Mammary epithelial cell (primary cell): ENCODE measurements at regions of chr2 and their contacts with region 1.

Region 1: DNA sequence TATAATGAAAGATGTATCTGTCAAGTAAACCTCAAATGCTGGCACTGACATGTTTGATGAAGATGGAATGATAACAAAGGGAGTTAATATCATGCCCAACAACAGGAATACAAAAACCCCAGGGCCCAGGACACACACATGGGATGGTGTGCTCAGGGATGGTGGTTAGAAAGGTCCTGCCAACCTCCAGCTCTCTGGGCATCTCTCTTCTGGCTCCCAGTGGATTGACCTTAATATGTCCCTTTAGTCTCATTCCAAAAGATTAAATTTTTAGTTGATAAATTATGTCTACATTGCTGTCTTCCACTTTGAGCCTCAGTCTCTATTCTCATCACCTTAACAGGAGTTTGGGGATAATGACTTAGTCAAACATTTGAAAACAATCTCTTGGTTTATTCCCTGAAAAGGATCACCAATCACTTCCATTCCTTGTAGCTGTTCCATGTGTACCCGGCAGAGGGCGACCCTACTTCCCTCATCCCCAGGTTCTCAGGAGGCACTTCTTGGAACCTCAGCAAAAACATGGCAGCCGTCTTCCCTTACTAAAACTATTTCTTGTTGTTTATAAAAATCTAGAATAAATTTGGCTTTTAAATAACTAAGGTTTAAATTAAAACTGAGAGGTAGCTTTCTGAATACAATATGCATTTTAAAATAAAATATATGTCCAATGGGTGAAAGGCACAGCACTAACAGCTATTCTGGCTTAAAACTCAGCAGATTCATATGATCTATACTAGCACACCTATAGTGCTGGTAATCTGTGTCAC is 29.6 kb downstream of the MCEE start:
- DNase-seq: peak; percentile 48
- H3K4me3 ChIP-seq: no peak overlapping the region
- H3K27ac ChIP-seq: no peak overlapping the region
- H3K4me1 ChIP-seq: peaks cover 13% of the 10 kb centered on the region
- H3K27me3 ChIP-seq: no peaks in the 10 kb centered on the region
- CTCF ChIP-seq: peak; percentile 85 to 93

Region 2: GRCh38 chr2:71049365-71050360 is 50.7 kb before region 1 on chr2:
- CTCF ChIA-PET with region 1: no interaction called
- dilution Hi-C with region 1: no loop called
- in situ Hi-C with region 1: no loop called
- intact Hi-C with region 1: loop called (anchors 2 kb)
- DNase-seq: peak; percentile 77
- H3K4me3 ChIP-seq: no peak overlapping the region
- H3K27ac ChIP-seq: no peak overlapping the region
- H3K4me1 ChIP-seq: peaks cover 6% of the 10 kb centered on the region
- H3K27me3 ChIP-seq: no peaks in the 10 kb centered on the region
- CTCF ChIP-seq: peak; percentile 20 to 56

Region 3: DNA sequence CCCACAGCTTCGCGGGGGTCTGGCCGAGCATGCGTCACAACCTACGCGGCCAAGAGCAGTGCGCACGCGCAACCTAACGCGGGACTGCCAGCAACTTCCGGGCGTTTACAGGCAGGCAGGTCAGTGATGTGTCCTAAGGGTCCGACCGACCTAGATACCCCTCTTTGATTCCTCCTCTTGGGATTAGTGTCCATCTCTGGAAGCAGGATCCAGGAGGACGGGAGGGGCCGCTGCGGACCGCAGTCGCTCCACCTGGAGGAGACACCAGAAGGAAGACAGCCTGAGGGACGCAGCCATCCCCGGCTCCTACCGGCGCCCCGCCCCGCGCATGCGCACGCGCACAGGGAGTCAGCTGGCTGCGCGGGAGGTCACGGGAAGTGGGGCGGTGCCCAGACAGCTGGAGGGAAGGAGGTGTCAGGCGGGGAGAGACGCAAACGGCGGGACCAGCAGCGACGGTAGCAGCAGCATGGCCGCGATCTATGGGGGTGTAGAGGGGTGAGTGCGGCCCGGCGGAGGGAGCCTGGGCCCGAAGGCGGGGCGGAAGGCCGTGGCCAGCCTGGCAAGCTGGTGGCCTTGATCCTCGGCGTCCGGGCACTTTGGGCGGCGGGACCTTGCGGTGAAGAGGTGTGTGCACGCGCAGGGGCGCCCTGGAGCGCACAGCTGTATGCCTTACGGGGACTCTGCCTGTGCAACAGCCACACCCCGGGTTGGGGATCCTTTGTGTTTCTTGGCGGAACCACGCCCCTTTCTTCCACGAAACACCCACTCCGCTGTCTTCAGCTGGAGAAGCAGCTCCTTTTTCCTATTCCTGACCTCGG is 32.0 kb before region 1 on chr2 and contains the start of gene NAGK:
- CTCF ChIA-PET with region 1: interaction called, 3 read pairs
- dilution Hi-C with region 1: no loop called
- in situ Hi-C with region 1: no loop called
- intact Hi-C with region 1: loop called (anchors 2 kb)
- DNase-seq: peak; percentile 95
- H3K4me3 ChIP-seq: peak within 1 kb of the TSS; percentile 66 to 78 (median 76)
- H3K27ac ChIP-seq: peak within 1 kb of the TSS; percentile 57
- H3K4me1 ChIP-seq: peaks cover 52% of the 10 kb centered on the region
- H3K27me3 ChIP-seq: no peaks in the 10 kb centered on the region
- CTCF ChIP-seq: peak in 1 of 2 donors; percentile 8
- total RNA-seq, gene NAGK: 29.5 to 80.8 TPM

Region 4: GRCh38 chr2:71130113-71130904 is 29.9 kb after region 1 on chr2 and contains the starts of genes MCEE and MPHOSPH10:
- CTCF ChIA-PET with region 1: no interaction called
- dilution Hi-C with region 1: no loop called
- in situ Hi-C with region 1: no loop called
- intact Hi-C with region 1: loop called (anchors 1 kb)
- DNase-seq: peak; percentile 92
- H3K4me3 ChIP-seq: peak within 1 kb of the TSS; percentile 91 to 98 (median 91)
- H3K27ac ChIP-seq: peak within 1 kb of the TSS; percentile 71
- H3K4me1 ChIP-seq: peaks cover 4% of the 10 kb centered on the region
- H3K27me3 ChIP-seq: no peaks in the 10 kb centered on the region
- CTCF ChIP-seq: no peak
- total RNA-seq, gene MCEE: 7.0 to 9.3 TPM
- total RNA-seq, gene MPHOSPH10: 10.5 to 28.1 TPM

Region 5: DNA sequence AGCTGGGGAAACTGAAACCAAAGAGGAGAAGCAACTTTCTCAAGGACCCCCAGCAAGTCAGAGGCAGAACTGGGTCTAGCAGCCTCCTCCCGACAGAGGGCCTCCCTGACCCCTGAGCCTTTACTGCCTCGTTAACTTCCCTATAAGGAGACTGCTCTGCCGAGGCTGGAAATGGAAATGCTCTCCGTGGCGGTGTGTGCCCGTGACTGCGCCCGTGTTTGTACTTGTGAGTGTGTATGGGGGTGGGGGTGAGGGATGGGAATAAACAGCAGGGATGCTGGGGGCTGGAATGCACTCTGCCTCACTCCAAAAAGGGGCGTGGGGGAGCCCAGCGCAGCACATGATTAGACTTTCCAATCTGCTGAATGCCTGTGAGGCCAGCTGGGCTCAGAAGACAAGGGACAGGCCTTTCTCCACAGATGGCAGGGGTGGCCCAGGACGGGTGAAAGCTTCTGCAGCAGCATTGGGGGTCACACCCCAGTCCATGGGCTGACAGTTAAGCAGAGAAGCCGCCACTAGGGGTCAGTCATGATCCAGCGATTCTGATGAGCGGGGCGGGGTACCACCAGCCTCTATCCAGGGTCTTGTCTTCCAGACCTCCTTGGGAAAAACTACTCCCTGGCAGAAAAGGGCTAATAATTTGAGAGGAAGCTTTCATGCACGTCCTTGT is 56.9 kb after region 1 on chr2:
- CTCF ChIA-PET with region 1: interaction called, 9 read pairs
- dilution Hi-C with region 1: no loop called
- in situ Hi-C with region 1: no loop called
- intact Hi-C with region 1: loop called (anchors 1 kb)
- DNase-seq: no peak
- H3K4me3 ChIP-seq: no peak overlapping the region
- H3K27ac ChIP-seq: no peak overlapping the region
- H3K4me1 ChIP-seq: no peaks in the 10 kb centered on the region
- H3K27me3 ChIP-seq: no peaks in the 10 kb centered on the region
- CTCF ChIP-seq: peak; percentile 66 to 79

Region 6: DNA sequence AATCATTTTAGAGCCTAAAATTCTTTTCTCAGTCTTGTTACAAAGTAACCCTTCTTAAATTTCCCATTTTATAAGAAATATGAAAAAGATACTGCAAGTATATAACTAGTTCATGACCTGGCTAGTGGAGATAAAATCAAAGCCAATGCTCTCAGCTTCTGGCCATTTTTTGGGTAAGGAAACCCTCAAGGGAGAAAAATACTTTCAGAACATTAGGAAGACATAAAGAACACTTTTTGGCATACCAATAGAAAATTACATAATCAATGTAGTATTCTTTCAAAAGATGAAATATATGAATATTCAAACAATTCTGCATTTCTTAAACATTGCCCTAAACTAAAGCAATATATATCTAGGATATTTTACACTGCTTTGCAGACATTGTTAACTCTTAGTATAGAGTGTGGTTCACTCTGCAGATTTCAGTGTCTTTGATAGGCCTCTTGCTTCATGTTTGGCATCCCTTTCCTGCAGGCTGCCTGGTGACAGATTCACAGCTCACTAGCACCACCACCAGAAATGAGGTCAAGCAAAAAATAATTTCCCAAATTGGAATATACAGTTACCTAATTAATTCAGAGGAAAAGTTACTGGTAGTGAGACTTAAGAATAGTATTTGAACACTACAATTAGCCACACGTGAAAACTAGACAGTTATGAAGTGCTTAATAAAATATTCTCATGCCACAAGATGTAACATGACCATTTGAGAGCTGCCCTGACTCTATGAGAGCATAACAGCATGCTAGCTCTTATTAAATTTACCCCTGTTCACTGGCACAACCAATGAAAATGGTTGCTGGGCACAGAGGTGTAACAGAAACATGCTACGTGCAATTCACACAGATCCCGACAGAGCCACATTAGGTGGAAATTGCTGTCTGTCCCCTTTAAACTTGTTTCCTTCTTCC is 90.5 kb after region 1 on chr2:
- CTCF ChIA-PET with region 1: interaction called, 12 read pairs
- dilution Hi-C with region 1: no loop called
- in situ Hi-C with region 1: no loop called
- intact Hi-C with region 1: loop called (anchors 1 kb)
- DNase-seq: peak; percentile 8
- H3K4me3 ChIP-seq: no peak overlapping the region
- H3K27ac ChIP-seq: no peak overlapping the region
- H3K4me1 ChIP-seq: no peaks in the 10 kb centered on the region
- H3K27me3 ChIP-seq: no peaks in the 10 kb centered on the region
- CTCF ChIP-seq: peak; percentile 28 to 55

Region 7: GRCh38 chr2:71226965-71227560 is 126.7 kb after region 1 on chr2 and contains the start of gene PAIP2B:
- CTCF ChIA-PET with region 1: interaction called, 11 read pairs
- dilution Hi-C with region 1: no loop called
- in situ Hi-C with region 1: no loop called
- intact Hi-C with region 1: no loop called
- DNase-seq: peak; percentile 100
- H3K4me3 ChIP-seq: peak within 1 kb of the TSS; percentile 83 to 92 (median 84)
- H3K27ac ChIP-seq: peak within 1 kb of the TSS; percentile 19
- H3K4me1 ChIP-seq: peaks cover 9% of the 10 kb centered on the region
- H3K27me3 ChIP-seq: peaks cover 3% of the 10 kb centered on the region
- CTCF ChIP-seq: no peak
- total RNA-seq, gene PAIP2B: 2.0 to 2.1 TPM